Heart left ventricle (tissue), 16 donors: ENCODE measurements at regions of chr17 and their contacts with region 1.

Region 1: GRCh38 chr17:68759343-68760132 is 158.4 kb upstream of the FAM20A start:
- DNase-seq: peak; percentile 86 to 92 (median 86)
- ATAC-seq: peak; percentile 96 to 100 (median 98)
- H3K4me3 ChIP-seq: peak overlapping the region in 10 of 12 donors; percentile 17 to 54 (median 37)
- H3K27ac ChIP-seq: peak overlapping the region; percentile 30 to 95 (median 78)
- H3K4me1 ChIP-seq: peaks cover 0 to 15% (median 6%) of the 10 kb centered on the region in 12 donors
- H3K27me3 ChIP-seq: no peaks in the 10 kb centered on the region
- CTCF ChIP-seq: peak; percentile 74 to 96 (median 87)
- POLR2A ChIP-seq: no peak

Region 2: DNA sequence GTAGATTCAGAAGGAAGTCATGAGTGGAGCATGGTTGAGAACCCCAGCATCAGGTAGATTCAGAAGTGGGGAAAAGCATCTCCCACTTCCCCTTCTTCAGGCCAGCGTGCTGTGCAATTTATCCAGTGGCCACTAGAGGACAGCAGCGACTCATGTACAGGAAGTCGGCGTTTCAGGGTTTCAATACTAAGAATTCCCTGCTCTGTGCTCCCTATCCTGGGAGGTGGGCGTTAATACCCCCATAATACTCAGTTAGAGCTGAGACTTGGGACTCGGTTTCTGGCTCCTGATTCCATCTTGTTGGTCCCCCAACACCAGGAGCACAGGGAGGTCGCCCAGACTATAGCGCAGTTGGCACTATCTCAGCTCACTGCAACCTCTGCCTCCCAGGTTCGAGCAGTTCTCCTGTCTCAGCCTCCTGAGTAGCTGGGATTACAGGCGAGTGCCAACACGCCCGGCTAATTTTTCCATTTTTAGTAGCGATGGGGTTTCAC is 587.0 kb before region 1 on chr17:
- intact Hi-C with region 1: loop called in 9 of 10 experiments (anchors 5 to 10 kb)
- DNase-seq: peak; percentile 53 to 73 (median 62)
- ATAC-seq: peak; percentile 54 to 81 (median 77)
- H3K4me3 ChIP-seq: no peak overlapping the region
- H3K27ac ChIP-seq: no peak overlapping the region
- H3K4me1 ChIP-seq: peaks cover 0 to 4% (median 0%) of the 10 kb centered on the region in 12 donors
- H3K27me3 ChIP-seq: no peaks in the 10 kb centered on the region
- CTCF ChIP-seq: peak; percentile 91 to 99 (median 97)
- POLR2A ChIP-seq: no peak

Region 3: DNA sequence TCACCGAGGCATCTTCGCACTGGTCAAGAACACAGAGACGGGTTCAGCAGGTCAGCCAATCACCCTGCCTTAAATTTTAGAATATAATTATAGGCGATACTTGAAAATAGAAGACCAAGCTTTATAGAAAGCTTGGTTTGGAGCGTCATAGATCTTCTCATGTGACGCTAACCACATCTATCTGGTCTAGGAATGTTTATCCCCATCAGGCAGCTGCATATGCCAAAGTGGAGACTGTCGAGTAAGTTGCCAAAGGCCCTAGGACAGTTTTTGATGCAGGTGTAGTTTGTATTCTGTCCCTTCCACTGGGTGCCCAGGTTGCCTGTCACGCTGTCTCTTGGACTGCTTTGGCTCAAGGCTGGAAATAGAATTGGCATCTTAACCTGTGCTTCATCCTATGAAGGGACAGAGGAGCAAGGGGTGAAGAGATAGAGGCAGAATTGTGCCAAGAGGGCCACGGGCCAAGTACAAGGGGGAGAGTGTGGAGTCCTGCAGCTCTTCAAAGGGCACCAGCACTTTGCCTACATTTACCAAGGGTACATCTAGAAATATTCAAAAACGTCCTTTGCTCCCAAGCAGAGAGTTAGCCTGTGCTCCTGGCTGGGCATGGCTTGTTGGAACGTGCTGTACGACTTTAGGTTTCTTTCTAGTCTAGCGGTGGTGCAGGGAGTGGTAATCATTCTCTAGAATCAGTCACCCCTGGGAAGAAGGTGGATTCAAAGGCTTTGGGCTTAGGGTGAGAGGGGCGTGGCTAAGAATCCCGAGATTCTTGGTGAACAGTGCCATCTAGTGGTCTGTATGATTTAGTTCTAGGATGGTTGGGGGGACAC is 296.9 kb before region 1 on chr17:
- intact Hi-C with region 1: loop called in 7 of 10 experiments (anchors 5 to 10 kb)
- DNase-seq: peak; percentile 62 to 87 (median 72)
- ATAC-seq: peak; percentile 63 to 80 (median 78)
- H3K4me3 ChIP-seq: peak overlapping the region in 2 of 12 donors; percentile 15
- H3K27ac ChIP-seq: peak overlapping the region; percentile 59 to 96 (median 80)
- H3K4me1 ChIP-seq: peaks cover 0 to 57% (median 28%) of the 10 kb centered on the region in 12 donors
- H3K27me3 ChIP-seq: no peaks in the 10 kb centered on the region
- CTCF ChIP-seq: peak; percentile 56 to 84 (median 75)
- POLR2A ChIP-seq: no peak

Region 4: DNA sequence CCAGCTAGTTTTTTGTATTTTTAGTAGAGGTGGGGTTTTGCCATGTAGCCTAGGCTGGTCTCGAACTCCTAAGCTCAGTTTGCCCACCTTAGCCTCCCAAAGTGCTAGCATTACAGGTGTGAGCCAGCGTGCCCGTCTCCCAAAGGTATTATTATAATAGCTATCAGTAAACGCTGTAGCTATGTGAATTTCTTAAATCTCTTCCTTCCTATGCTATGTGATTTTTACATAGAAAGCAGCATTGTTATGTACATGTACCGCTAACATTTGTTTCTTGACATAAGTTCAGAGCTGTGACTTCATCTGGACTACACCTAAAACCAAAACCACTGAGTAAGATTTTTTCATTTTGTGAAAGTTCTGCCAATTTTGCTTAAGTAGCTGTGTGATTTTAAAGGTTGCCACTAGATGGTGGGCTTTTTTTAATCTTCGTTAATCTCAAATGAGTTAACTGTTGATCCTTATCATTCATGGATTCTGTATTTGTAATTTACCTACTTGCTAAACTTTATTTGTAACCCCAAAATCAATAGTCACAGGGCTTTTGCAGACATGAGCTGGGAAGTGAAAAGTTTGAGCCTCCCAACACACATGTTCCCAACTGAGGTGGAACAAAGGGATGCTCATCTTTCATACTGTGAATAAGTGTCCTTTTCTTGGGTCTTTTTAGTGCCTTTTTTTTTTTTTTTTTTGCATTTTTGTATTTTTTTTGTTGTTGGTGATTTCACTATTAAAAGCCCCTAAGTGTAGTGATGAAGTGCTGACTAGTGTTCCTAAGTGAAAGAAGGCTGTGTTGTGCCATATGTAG is 225.4 kb before region 1 on chr17:
- intact Hi-C with region 1: loop called in 8 of 10 experiments (anchors 5 to 10 kb)
- DNase-seq: no peak
- ATAC-seq: peak in 1 of 4 donors; percentile 10
- H3K4me3 ChIP-seq: no peak overlapping the region
- H3K27ac ChIP-seq: peak overlapping the region in 2 of 12 donors; percentile 1 to 45
- H3K4me1 ChIP-seq: peaks cover 0 to 31% (median 10%) of the 10 kb centered on the region in 12 donors
- H3K27me3 ChIP-seq: no peaks in the 10 kb centered on the region
- CTCF ChIP-seq: peak in 11 of 12 donors; percentile 15 to 53 (median 25)
- POLR2A ChIP-seq: no peak

Region 5: DNA sequence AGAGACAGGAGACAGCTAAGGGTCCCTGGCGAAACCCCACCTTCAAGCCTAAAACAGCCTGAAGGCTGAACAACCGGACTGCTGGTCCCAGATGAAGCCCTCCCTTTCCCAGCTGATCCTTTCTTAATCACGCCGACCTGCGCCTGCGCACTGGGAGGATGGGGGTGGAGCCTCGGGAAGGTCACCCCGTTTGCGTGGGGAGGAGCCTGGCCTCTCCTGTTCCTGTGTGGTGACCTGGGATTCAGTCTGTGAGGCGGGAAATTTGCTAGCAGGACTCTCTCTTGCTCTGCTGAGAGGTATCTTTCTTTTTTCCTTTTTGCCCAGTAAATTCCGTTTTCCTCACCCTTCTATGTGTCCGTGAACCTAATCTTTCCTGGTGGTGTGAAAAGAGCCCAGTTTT is 168.0 kb before region 1 on chr17:
- intact Hi-C with region 1: loop called in 1 of 10 experiments (anchors 10 kb)
- DNase-seq: peak in 3 of 5 donors; percentile 24 to 41 (median 34)
- ATAC-seq: no peak
- H3K4me3 ChIP-seq: no peak overlapping the region
- H3K27ac ChIP-seq: peak overlapping the region in 2 of 12 donors; percentile 34 to 38
- H3K4me1 ChIP-seq: peaks cover 0 to 52% (median 4%) of the 10 kb centered on the region in 12 donors
- H3K27me3 ChIP-seq: no peaks in the 10 kb centered on the region
- CTCF ChIP-seq: no peak
- POLR2A ChIP-seq: no peak

Region 6: DNA sequence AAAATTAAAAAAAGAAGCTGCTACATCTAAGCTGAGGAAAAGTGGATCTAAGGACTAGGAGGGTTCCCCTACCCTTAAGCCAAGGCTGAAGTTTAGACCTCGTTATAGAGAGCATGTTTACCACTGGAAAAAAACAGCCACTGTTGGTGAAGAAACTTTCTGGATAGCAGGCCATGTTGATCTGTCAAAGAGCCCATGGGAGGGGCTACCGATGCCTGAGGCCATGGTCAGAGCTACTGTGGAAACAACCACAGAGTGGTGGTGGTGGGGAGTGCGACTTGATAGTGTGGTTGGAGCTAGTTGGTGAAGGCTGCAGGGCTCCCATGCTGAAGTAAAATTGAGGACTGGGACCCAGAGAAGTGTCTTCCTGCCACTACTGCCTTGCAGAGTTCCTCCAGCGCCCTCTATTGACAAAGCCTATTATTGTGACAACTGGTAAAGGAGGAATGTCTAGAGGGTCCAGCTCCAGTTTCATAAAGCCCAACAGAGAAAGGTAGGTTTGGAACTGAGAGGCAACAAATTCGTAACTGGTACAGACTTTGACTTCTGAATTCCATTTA is 145.7 kb before region 1 on chr17:
- intact Hi-C with region 1: loop called in 2 of 10 experiments (anchors 5 to 10 kb)
- DNase-seq: peak in 2 of 5 donors; percentile 40 to 46
- ATAC-seq: peak; percentile 42 to 80 (median 71)
- H3K4me3 ChIP-seq: no peak overlapping the region
- H3K27ac ChIP-seq: no peak overlapping the region
- H3K4me1 ChIP-seq: peaks cover 0 to 5% (median 0%) of the 10 kb centered on the region in 12 donors
- H3K27me3 ChIP-seq: no peaks in the 10 kb centered on the region
- CTCF ChIP-seq: peak; percentile 46 to 75 (median 66)
- POLR2A ChIP-seq: no peak